GM12878 (cell line): ENCODE measurements at regions of chr5 and their contacts with region 1.

Region 1: GRCh38 chr5:38208782-38209378 is 49.5 kb upstream of the EGFLAM start:
- DNase-seq: no peak
- ATAC-seq: peak; percentile 44; the same call in 2 of the 3 replicates
- H3K4me3 ChIP-seq: no peak overlapping the region
- H3K27ac ChIP-seq: no peak overlapping the region
- H3K4me1 ChIP-seq: no peaks in the 10 kb centered on the region
- H3K27me3 ChIP-seq: no peaks in the 10 kb centered on the region
- CTCF ChIP-seq: peak; percentile 26 to 36 (median 34); a peak in 3 of 6 replicates
- EP300 ChIP-seq: no peak
- POLR2A ChIP-seq: no peak
- RAD21 ChIP-seq: peak; percentile 34; the same call in 1 of the 2 replicates

Region 2: DNA sequence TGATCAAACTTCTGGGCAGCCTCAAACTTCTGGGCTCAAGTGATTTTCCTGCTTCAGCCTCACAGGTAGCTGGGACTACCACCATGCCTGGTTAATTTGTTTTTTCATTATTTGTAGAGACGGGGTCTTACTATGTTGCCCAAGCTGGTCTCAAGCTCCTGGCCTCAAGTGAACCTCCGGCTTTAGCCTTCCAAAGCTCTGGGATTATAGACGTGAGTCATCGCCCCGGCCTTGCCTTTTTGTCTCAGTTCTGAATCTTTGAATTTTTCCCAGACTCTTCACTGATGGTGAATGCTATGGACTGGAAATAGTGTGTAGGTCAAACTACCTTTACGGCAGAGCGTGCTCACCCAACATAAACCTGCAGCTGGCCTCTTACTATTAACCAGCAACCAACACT is 17.2 kb after region 1 on chr5:
- CTCF ChIA-PET with region 1: no interaction called
- POLR2A ChIA-PET with region 1: no interaction called
- RAD21 ChIA-PET with region 1: no interaction called
- SMC1A ChIA-PET with region 1: no interaction called
- in situ Hi-C with region 1: no loop called
- intact Hi-C with region 1: no loop called
- DNase-seq: no peak
- ATAC-seq: no peak
- H3K4me3 ChIP-seq: no peak overlapping the region
- H3K27ac ChIP-seq: no peak overlapping the region
- H3K4me1 ChIP-seq: no peaks in the 10 kb centered on the region
- H3K27me3 ChIP-seq: no peaks in the 10 kb centered on the region
- CTCF ChIP-seq: no peak
- EP300 ChIP-seq: no peak
- POLR2A ChIP-seq: no peak
- RAD21 ChIP-seq: no peak

Region 3: DNA sequence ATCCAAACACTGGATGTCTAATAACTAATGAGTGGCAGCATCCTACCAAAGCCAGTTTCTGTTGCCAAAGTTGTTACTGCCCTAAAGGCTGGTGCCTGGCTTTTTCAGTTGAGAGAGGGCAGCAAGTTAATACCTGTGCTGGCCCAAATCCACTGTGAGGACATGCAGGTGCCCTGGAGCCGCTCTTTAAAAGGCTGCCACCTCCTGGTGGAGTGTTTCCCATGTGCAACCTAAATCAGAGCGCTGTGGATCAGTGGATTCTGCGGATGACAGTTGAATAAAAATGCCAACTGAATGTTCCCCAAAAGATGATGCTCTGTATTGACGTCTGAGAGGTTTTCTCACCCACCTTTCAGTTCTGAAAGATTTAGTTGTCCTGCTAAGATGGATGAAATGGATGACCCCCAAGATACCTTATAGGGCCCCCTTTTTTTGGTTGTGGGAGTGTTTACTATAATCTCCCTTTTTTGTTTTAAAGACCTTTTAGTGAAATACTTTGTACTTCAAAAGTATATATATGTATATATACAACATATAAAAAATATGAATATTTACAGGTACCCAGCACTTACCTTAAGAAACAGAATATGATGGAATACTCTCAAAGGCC is 195.9 kb after region 1 on chr5:
- CTCF ChIA-PET with region 1: no interaction called
- POLR2A ChIA-PET with region 1: no interaction called
- RAD21 ChIA-PET with region 1: no interaction called
- SMC1A ChIA-PET with region 1: no interaction called
- in situ Hi-C with region 1: no loop called
- intact Hi-C with region 1: loop called (anchors 2 kb)
- DNase-seq: no peak
- ATAC-seq: peak; percentile 48; the same call in 2 of the 3 replicates
- H3K4me3 ChIP-seq: no peak overlapping the region
- H3K27ac ChIP-seq: no peak overlapping the region
- H3K4me1 ChIP-seq: no peaks in the 10 kb centered on the region
- H3K27me3 ChIP-seq: peaks cover 0 to 5% of the 10 kb centered on the region in 2 experiments; a peak in 2 of 4 replicates
- CTCF ChIP-seq: peak; percentile 17 to 29 (median 17); a peak in 5 of 6 replicates
- EP300 ChIP-seq: no peak
- POLR2A ChIP-seq: no peak
- RAD21 ChIP-seq: no peak